ENCODE measurements at regions of chr2 and their contacts with region 1.

Region 1: DNA sequence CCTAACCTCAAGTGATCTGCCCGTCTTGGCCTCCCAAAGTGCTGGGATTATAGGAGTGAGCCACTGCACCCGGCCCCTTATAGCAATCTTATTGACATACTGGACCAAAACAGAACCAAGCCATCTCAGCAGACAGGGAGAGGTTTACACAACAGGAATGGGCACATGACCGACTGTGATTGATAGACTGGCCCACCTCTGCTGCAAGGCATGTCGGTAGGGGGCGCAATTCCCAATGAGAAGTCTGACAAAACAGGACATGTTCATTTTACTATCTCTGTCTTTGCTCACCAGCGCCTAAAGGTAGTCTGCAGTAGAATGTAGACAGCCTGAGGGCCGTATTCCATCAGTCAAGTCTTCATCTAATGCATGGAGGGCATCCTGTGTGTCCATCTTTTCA is 2.0 kb downstream of the LYPD6B start:
- DNase-seq: no peak
- H3K4me3 ChIP-seq: no peak overlapping the region
- H3K27ac ChIP-seq: peak overlapping the region; percentile 32; the same call in 1 of the 2 replicates
- H3K4me1 ChIP-seq: peaks cover 12% of the 10 kb centered on the region
- H3K27me3 ChIP-seq: no peaks in the 10 kb centered on the region
- CTCF ChIP-seq: peak; percentile 55

Region 2: GRCh38 chr2:148936859-148937450 is 103.5 kb before region 1 on chr2:
- CTCF ChIA-PET with region 1: no interaction called
- POLR2A ChIA-PET with region 1: no interaction called
- intact Hi-C with region 1: no loop called
- DNase-seq: no peak
- H3K4me3 ChIP-seq: no peak overlapping the region
- H3K27ac ChIP-seq: no peak overlapping the region
- H3K4me1 ChIP-seq: no peaks in the 10 kb centered on the region
- H3K27me3 ChIP-seq: no peaks in the 10 kb centered on the region
- CTCF ChIP-seq: 0 out of 2 replicates have a peak, but pooled peaks have one; percentile 13

Region 3: GRCh38 chr2:149087751-149088150 is 47.3 kb after region 1 on chr2:
- CTCF ChIA-PET with region 1: no interaction called
- POLR2A ChIA-PET with region 1: no interaction called
- intact Hi-C with region 1: no loop called
- DNase-seq: no peak
- H3K4me3 ChIP-seq: no peak overlapping the region
- H3K27ac ChIP-seq: no peak overlapping the region
- H3K4me1 ChIP-seq: no peaks in the 10 kb centered on the region
- H3K27me3 ChIP-seq: no peaks in the 10 kb centered on the region
- CTCF ChIP-seq: peak; percentile 49; the same call in 1 of the 2 replicates

Region 4: GRCh38 chr2:149098701-149099100 is 58.2 kb after region 1 on chr2:
- CTCF ChIA-PET with region 1: no interaction called
- POLR2A ChIA-PET with region 1: no interaction called
- intact Hi-C with region 1: no loop called
- DNase-seq: peak in 1 of 2 experiments; percentile 87
- H3K4me3 ChIP-seq: no peak overlapping the region
- H3K27ac ChIP-seq: peak overlapping the region; percentile 70; the same call in 1 of the 2 replicates
- H3K4me1 ChIP-seq: peaks cover 12% of the 10 kb centered on the region
- H3K27me3 ChIP-seq: no peaks in the 10 kb centered on the region
- CTCF ChIP-seq: no peak

Region 5: GRCh38 chr2:149167411-149167810 is 127.0 kb after region 1 on chr2:
- CTCF ChIA-PET with region 1: no interaction called
- POLR2A ChIA-PET with region 1: no interaction called
- intact Hi-C with region 1: loop called (anchors 5 kb)
- DNase-seq: peak in 1 of 2 experiments; percentile 69
- H3K4me3 ChIP-seq: no peak overlapping the region
- H3K27ac ChIP-seq: peak overlapping the region; percentile 34
- H3K4me1 ChIP-seq: peaks cover 56% of the 10 kb centered on the region
- H3K27me3 ChIP-seq: no peaks in the 10 kb centered on the region
- CTCF ChIP-seq: no peak

Region 6: DNA sequence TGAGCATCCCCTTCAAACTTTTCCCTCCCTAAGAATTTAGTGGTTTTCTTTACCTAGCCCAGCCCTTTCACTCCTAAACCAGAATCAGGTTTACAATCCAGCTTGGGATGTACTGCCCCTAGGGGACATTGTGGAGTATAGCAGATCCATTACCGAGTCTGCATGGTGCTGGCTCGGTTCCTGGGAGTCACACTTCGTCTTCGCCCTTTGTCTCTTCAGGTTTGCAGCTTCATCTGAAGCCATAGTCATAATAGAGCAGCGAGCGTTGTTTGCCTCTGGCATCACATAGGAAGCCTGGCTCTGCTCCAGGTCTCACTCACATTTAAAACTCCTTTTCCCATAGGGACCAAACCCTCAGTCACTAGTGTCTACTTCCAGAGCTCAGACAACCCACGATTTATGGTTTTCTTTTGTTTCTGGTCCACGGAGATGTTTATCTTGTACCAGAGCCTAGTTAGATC is 273.1 kb after region 1 on chr2:
- CTCF ChIA-PET with region 1: no interaction called
- POLR2A ChIA-PET with region 1: no interaction called
- intact Hi-C with region 1: loop called (anchors 5 kb)
- DNase-seq: peak in 1 of 2 experiments; percentile 5
- H3K4me3 ChIP-seq: no peak overlapping the region
- H3K27ac ChIP-seq: no peak overlapping the region
- H3K4me1 ChIP-seq: no peaks in the 10 kb centered on the region
- H3K27me3 ChIP-seq: no peaks in the 10 kb centered on the region
- CTCF ChIP-seq: peak; percentile 76

Region 7: GRCh38 chr2:149538138-149538833 is 497.8 kb after region 1 on chr2:
- CTCF ChIA-PET with region 1: interaction called, 4 read pairs
- POLR2A ChIA-PET with region 1: no interaction called
- intact Hi-C with region 1: loop called (anchors 1 kb)
- DNase-seq: peak; percentile 57 to 85
- H3K4me3 ChIP-seq: no peak overlapping the region
- H3K27ac ChIP-seq: no peak overlapping the region
- H3K4me1 ChIP-seq: peaks cover 13% of the 10 kb centered on the region; the same call in 1 of the 2 replicates
- H3K27me3 ChIP-seq: no peaks in the 10 kb centered on the region
- CTCF ChIP-seq: no peak

Measured in PC-9 (cell line).